HEK293 (cell line): ENCODE measurements at regions of chr2 and their contacts with region 1.

Region 1: DNA sequence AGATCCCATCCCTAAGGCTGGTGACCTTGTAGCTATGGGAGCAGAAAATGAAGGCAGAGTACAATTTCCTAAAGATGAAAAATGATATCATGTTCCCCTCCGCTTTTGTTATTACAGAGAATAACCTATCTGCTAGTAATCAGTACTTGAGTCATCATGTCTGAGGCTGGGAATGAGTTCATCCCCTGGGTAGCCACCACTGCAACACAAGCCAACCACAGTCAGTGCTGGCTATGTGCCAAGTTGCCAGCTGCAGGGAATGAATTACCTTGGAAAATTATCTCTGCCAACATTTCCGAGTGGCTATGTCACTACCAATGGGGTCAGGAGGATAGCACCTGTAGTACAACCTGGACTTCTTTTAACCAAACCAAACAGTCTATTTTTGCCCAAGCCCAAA is 1094.7 kb upstream of the DDX18 start:
- H3K4me3 ChIP-seq: no peak overlapping the region
- H3K27ac ChIP-seq: no peak overlapping the region
- H3K4me1 ChIP-seq: no peaks in the 10 kb centered on the region
- CTCF ChIP-seq: no peak

Region 2: GRCh38 chr2:116706396-116706795 is 13.4 kb before region 1 on chr2:
- CTCF ChIA-PET with region 1: interaction called, 3 read pairs
- POLR2A ChIA-PET with region 1: interaction called, 11 read pairs
- H3K4me3 ChIP-seq: no peak overlapping the region
- H3K27ac ChIP-seq: no peak overlapping the region
- H3K4me1 ChIP-seq: no peaks in the 10 kb centered on the region
- CTCF ChIP-seq: no peak

Region 3: GRCh38 chr2:116769515-116769914 is 49.7 kb after region 1 on chr2:
- CTCF ChIA-PET with region 1: no interaction called
- POLR2A ChIA-PET with region 1: no interaction called
- H3K4me3 ChIP-seq: no peak overlapping the region
- H3K27ac ChIP-seq: no peak overlapping the region
- H3K4me1 ChIP-seq: no peaks in the 10 kb centered on the region
- CTCF ChIP-seq: no peak

Region 4: DNA sequence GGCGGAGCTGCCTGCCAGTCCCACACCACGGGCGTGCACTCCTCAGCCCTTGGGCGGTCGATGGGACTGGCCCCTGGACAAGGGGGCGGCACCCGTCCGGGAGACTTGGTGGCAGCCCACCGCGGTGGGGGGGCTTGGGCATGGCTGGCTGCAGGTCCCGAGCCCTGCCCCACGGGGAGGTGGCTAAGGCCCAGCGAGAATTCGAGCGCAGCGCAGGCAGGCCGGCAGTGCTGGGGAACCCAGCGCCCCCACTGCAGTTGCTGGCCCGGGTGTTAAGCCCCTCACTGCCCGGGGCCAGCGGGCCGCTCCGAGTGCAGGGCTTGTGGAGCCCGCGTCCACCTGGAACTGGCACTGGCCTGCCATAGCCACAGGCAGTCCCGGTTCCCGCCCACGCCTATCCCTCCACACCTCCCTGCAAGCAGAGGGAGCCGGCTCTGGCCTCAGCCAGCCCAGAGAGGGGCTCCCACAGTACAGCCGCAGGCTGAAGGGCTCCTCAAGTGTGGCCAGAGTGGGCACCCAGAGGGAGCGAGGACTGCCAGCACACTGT is 351.8 kb after region 1 on chr2:
- CTCF ChIA-PET with region 1: no interaction called
- POLR2A ChIA-PET with region 1: no interaction called
- H3K4me3 ChIP-seq: no peak overlapping the region
- H3K27ac ChIP-seq: no peak overlapping the region
- H3K4me1 ChIP-seq: no peaks in the 10 kb centered on the region
- CTCF ChIP-seq: no peak